ENCODE measurements at regions of chr7 and their contacts with region 1.

Region 1: DNA sequence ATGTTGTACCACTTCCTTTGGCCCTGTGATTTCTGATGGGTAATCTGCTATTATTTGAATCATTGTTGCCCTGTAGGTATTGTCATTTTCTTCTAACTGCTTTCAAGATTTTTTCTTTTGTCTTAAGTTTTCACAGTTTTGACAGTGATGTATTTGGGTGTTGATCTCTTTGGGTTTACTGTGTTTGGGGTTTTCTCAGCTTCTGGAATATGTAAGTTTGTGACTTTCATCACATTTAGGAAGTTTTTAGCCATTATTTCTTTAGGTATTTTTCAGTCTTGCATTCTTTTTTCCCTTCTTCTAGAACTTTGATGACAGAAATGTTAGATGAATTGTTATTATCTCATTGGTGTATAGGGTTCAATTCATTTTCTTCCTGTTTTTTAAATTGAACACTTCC is 23.1 kb upstream of the PON2 start:
- DNase-seq: no peak
- H3K4me3 ChIP-seq: no peak overlapping the region
- H3K27ac ChIP-seq: no peak overlapping the region
- H3K4me1 ChIP-seq: no peaks in the 10 kb centered on the region
- H3K27me3 ChIP-seq: no peaks in the 10 kb centered on the region
- CTCF ChIP-seq: no peak
- POLR2A ChIP-seq: no peak

Region 2: DNA sequence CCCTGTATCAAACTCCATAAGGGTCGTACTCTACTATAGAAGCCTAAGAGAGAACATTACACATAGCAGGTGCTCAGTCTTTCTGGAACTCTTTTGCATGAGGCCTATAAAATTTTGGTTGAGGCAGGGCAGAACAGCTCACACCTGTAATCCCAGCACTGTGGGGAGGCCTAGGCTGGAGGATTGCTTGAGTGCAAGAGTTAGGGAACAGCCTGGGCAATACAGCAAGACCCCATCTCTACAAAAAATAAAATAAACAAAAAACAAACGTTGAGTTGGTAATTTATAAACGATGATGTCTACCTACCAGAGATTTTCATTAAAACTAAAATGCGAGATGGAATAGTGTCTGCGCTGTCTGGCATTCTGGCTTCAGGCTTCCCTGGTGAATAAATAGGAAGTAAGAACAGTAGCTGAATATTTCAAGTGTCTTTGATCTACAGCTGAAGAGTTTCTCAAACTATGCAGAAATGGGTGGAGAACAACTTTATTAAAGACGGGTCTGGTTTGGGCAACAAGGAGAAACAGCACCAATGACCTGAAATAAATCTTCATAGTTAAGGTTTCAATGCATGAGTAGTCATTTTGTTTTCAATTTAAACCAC is 23.9 kb before region 1 on chr7:
- intact Hi-C with region 1: loop called (anchors 2 kb)
- DNase-seq: no peak
- H3K4me3 ChIP-seq: peak overlapping the region; percentile 62 to 97 (median 83)
- H3K27ac ChIP-seq: peak overlapping the region; percentile 94 to 99
- H3K4me1 ChIP-seq: no peaks in the 10 kb centered on the region
- H3K27me3 ChIP-seq: no peaks in the 10 kb centered on the region
- CTCF ChIP-seq: no peak
- POLR2A ChIP-seq: no peak